H1 (cell line): ENCODE measurements at regions of chr1 and their contacts with region 1.

Region 1: GRCh38 chr1:68120136-68120791 is 69.8 kb upstream of the DIRAS3 start:
- DNase-seq: peak in 1 of 2 experiments; percentile 75
- H3K4me3 ChIP-seq: no peak overlapping the region
- H3K27ac ChIP-seq: no peak overlapping the region
- H3K4me1 ChIP-seq: peaks cover 0 to 2% (median 0%) of the 10 kb centered on the region in 4 experiments; a peak in 1 of 7 replicates
- H3K27me3 ChIP-seq: no peaks in the 10 kb centered on the region
- CTCF ChIP-seq: peak in 2 of 3 experiments; percentile 86 to 93; a peak in 3 of 4 replicates
- EP300 ChIP-seq: no peak
- POLR2A ChIP-seq: no peak
- RAD21 ChIP-seq: peak; percentile 95 to 99

Region 2: DNA sequence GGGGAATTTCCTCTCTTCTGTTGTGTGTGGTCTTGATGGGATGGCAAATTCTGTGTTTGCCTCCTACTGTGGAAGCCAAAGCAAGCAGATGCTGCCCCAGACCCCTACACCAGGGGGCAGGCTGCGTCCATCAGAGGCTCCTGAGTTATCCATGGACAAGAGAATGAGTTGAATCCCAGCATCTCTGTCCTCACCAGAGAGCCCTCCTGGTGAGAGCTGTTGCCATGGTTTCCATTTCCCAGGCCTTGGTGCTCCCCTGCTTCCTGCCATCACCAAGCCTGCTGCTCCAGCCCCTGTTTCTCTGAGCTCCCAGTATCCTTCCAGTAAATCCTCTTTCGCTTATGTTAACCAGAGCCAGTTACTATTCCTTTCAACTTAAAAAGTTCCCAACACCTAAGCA is 266.6 kb before region 1 on chr1:
- CTCF ChIA-PET with region 1: interaction called, 140 read pairs
- POLR2A ChIA-PET with region 1: no interaction called
- DNase-seq: peak; percentile 85 to 95
- H3K4me3 ChIP-seq: no peak overlapping the region
- H3K27ac ChIP-seq: no peak overlapping the region
- H3K4me1 ChIP-seq: no peaks in the 10 kb centered on the region
- H3K27me3 ChIP-seq: no peaks in the 10 kb centered on the region
- CTCF ChIP-seq: peak; percentile 92 to 98 (median 95)
- EP300 ChIP-seq: no peak
- POLR2A ChIP-seq: no peak
- RAD21 ChIP-seq: peak; percentile 100

Region 3: DNA sequence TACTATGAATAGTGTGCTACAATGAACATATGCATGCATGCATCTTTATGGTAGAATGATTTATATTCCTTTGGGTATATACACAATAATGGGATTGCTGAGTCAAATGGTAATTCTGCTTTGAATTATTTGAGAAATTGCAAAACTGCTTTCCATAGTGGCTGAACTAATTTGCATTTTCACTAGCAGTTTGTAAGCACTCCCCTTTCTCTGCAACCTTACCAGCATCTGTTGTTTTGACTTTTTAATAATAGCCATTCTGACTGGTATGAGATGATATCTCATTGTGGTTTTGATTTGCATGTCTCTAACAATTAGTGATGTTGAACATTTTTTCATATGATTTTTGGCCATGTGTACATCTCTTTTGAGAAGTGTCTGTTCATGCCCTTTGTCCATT is 45.8 kb before region 1 on chr1:
- CTCF ChIA-PET with region 1: no interaction called
- POLR2A ChIA-PET with region 1: no interaction called
- DNase-seq: no peak
- H3K4me3 ChIP-seq: no peak overlapping the region
- H3K27ac ChIP-seq: no peak overlapping the region
- H3K4me1 ChIP-seq: no peaks in the 10 kb centered on the region
- H3K27me3 ChIP-seq: no peaks in the 10 kb centered on the region
- CTCF ChIP-seq: no peak
- EP300 ChIP-seq: no peak
- POLR2A ChIP-seq: no peak
- RAD21 ChIP-seq: no peak

Region 4: GRCh38 chr1:68141071-68142021 is 21.1 kb after region 1 on chr1:
- CTCF ChIA-PET with region 1: interaction called, 21 read pairs
- POLR2A ChIA-PET with region 1: no interaction called
- DNase-seq: peak in 1 of 2 experiments; percentile 52
- H3K4me3 ChIP-seq: no peak overlapping the region
- H3K27ac ChIP-seq: peak overlapping the region; percentile 12; the same call in 1 of the 2 replicates
- H3K4me1 ChIP-seq: peaks cover 4 to 16% (median 7%) of the 10 kb centered on the region in 4 experiments; a peak in 5 of 7 replicates
- H3K27me3 ChIP-seq: no peaks in the 10 kb centered on the region
- CTCF ChIP-seq: no peak
- EP300 ChIP-seq: 0 out of 3 replicates have a peak, but pooled peaks of 1 of the 2 experiments have one; percentile 35
- POLR2A ChIP-seq: peak in 1 of 2 experiments; percentile 41; a peak in 1 of 3 replicates
- RAD21 ChIP-seq: no peak

Region 5: DNA sequence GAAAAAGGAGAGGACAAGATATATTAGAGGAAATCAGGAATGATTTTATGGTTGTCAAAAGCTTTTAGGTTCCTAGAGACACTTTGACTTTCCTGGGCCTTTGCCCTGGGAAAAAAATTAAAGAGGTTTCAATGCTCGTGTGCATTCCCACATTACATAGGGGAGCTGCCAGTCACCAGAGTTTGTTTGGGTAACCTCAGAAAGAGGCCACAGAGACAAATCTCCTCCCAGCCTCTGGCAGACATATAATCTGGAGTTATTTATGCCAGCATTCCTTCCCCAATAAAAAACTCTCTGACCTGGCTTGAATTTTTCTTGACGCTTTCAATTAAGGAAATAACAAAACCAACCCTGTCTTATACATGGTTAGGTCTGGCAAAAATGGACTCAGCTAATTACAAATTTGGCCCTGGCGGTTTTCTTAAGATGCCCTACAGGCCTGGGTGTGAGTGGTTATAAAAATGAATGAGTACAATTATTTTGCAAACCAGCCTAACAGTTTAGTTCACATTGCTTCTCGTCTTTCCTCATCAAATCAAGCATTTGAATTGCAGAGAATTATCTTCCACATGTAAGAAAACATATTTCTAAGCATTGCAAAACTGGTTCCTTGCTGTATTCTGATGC is 48.4 kb after region 1 on chr1:
- CTCF ChIA-PET with region 1: interaction called, 24 read pairs
- POLR2A ChIA-PET with region 1: no interaction called
- DNase-seq: no peak
- H3K4me3 ChIP-seq: no peak overlapping the region
- H3K27ac ChIP-seq: no peak overlapping the region
- H3K4me1 ChIP-seq: no peaks in the 10 kb centered on the region
- H3K27me3 ChIP-seq: no peaks in the 10 kb centered on the region
- CTCF ChIP-seq: no peak
- EP300 ChIP-seq: no peak
- POLR2A ChIP-seq: no peak
- RAD21 ChIP-seq: no peak

Region 6: GRCh38 chr1:68232354-68233148 is 112.3 kb after region 1 on chr1 and contains the start of gene WLS:
- CTCF ChIA-PET with region 1: interaction called, 18 read pairs
- POLR2A ChIA-PET with region 1: interaction called, 3 read pairs
- DNase-seq: peak in 1 of 2 experiments; percentile 79
- H3K4me3 ChIP-seq: peak within 1 kb of the TSS; percentile 73 to 77 (median 74)
- H3K27ac ChIP-seq: no peak within 1 kb of the TSS
- H3K4me1 ChIP-seq: peaks cover 2 to 14% (median 7%) of the 10 kb centered on the region in 4 experiments
- H3K27me3 ChIP-seq: peaks cover 59 to 98% (median 83%) of the 10 kb centered on the region in 4 experiments
- CTCF ChIP-seq: no peak
- EP300 ChIP-seq: no peak
- POLR2A ChIP-seq: no peak
- RAD21 ChIP-seq: no peak; a peak in 1 of 4 replicates
- total RNA-seq, gene WLS: 1.6 and 2.7 TPM in 2 replicates

Region 7: GRCh38 chr1:68339471-68339870 is 219.2 kb after region 1 on chr1:
- CTCF ChIA-PET with region 1: interaction called, 202 read pairs
- POLR2A ChIA-PET with region 1: interaction called, 4 read pairs
- DNase-seq: no peak
- H3K4me3 ChIP-seq: no peak overlapping the region
- H3K27ac ChIP-seq: no peak overlapping the region
- H3K4me1 ChIP-seq: no peaks in the 10 kb centered on the region
- H3K27me3 ChIP-seq: no peaks in the 10 kb centered on the region
- CTCF ChIP-seq: no peak
- EP300 ChIP-seq: no peak
- POLR2A ChIP-seq: no peak
- RAD21 ChIP-seq: no peak

Region 8: DNA sequence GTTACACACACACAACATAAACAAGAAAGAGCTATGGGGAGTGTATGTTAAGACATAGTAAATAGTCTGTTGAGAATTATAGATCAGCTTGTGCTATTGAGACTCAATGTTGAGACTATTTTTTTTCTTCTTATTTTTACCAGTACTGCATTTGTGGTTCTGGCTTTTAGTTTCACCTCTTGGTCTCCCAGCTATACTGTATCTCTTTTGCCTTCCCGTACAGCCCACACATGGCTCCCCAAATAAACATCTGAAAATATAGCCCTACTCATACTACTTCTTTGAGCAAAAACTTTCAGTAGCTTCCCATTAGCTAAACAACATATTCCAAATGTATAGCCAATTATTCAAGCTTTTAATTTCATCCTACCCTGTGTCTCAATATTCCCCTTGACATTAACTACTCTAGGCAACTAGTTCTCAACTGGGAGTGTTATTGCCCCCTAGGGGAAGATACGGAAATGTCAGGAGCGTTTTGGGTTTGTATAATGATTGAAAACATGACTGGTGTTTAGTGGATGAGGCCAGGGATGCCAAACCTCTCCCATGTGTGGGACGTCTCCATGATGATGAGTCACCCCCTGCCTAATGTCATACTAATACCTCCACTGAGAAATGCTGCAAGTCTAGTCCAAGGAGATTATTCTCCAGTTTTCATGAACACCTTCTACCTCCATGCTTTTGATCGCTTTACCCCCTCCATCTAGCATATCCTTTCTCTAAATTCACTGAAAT is 322.7 kb after region 1 on chr1:
- CTCF ChIA-PET with region 1: interaction called, 28 read pairs
- POLR2A ChIA-PET with region 1: no interaction called
- DNase-seq: peak in 1 of 2 experiments; percentile 61
- H3K4me3 ChIP-seq: no peak overlapping the region
- H3K27ac ChIP-seq: no peak overlapping the region
- H3K4me1 ChIP-seq: peaks cover 0 to 2% (median 0%) of the 10 kb centered on the region in 4 experiments; a peak in 2 of 7 replicates
- H3K27me3 ChIP-seq: no peaks in the 10 kb centered on the region
- CTCF ChIP-seq: peak in 2 of 3 experiments; percentile 54 to 72; a peak in 2 of 4 replicates
- EP300 ChIP-seq: no peak
- POLR2A ChIP-seq: no peak
- RAD21 ChIP-seq: peak; percentile 56 to 68